ENCODE measurements at regions of chr20 and their contacts with region 1.

Region 1: DNA sequence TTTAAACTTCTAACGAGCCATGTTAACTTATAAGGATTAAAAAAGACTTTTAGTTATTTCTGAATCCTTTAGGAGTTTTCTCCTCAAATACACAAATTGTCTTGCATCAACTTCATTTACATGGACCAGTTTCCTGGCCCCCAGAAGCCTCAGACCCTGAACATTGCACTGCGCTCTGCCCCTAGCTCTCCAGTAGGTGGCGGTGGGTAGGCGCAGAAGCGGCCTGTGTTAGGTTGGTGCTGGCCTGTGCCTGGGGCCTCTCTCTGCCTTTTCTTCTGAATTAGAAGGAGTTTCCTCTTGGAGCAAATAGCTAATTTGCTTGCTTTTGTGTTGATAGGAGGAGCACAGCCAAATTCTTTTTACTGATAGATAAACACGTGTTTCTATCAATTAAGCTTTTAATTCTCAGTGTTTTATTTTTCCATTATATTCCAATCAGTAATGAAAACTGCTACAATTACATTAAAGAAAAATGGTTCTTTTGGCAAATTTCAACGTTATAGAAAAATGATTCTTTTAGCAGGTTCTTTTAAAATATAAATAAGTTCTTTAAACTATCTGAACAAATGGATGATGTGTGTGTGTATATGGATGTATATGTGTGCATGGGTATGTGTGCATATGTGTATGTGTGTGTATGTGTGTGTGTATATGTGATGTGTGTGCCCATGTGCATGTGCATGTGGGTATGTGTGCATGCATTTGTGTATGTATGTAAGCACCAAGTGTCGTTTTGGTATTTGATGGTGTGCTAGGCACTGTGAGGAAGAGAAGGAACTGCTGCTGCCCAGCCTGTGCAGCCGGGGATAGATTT is 44.5 kb downstream of the DTD1 start:
- DNase-seq: peak; percentile 15
- H3K4me3 ChIP-seq: no peak overlapping the region
- H3K27ac ChIP-seq: no peak overlapping the region
- H3K27me3 ChIP-seq: no peaks in the 10 kb centered on the region
- CTCF ChIP-seq: peak; percentile 99

Region 2: DNA sequence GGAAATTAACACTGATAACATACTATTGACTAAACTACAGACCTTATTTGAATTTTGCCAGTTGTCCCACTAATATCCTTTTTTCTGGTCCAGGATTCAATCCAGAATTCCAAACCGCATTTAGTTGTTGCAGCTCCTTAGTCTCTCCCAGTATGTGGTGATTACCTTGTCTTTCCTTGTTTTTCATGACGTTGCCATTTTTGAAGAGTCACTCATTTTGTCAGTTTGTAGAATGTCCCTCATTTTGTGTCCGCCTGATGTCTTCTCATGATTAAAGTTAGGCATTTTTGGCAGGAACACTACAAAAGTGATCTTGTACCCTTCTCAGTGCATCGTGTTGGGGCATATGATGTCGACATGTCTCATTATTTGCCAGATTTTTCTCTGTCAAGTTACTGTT is 11.4 kb before region 1 on chr20:
- CTCF ChIA-PET with region 1: interaction called, 12 read pairs
- POLR2A ChIA-PET with region 1: no interaction called
- DNase-seq: no peak
- H3K4me3 ChIP-seq: no peak overlapping the region
- H3K27ac ChIP-seq: no peak overlapping the region
- H3K27me3 ChIP-seq: no peaks in the 10 kb centered on the region
- CTCF ChIP-seq: no peak

Region 3: GRCh38 chr20:18653736-18654447 is 21.5 kb after region 1 on chr20:
- CTCF ChIA-PET with region 1: interaction called, 17 read pairs
- POLR2A ChIA-PET with region 1: no interaction called
- DNase-seq: no peak
- H3K4me3 ChIP-seq: no peak overlapping the region
- H3K27ac ChIP-seq: no peak overlapping the region
- H3K27me3 ChIP-seq: no peaks in the 10 kb centered on the region
- CTCF ChIP-seq: no peak

Region 4: GRCh38 chr20:18712131-18712530 is 79.7 kb after region 1 on chr20:
- CTCF ChIA-PET with region 1: interaction called, 13 read pairs
- POLR2A ChIA-PET with region 1: no interaction called
- DNase-seq: no peak
- H3K4me3 ChIP-seq: no peak overlapping the region
- H3K27ac ChIP-seq: no peak overlapping the region
- H3K27me3 ChIP-seq: no peaks in the 10 kb centered on the region
- CTCF ChIP-seq: no peak

Region 5: DNA sequence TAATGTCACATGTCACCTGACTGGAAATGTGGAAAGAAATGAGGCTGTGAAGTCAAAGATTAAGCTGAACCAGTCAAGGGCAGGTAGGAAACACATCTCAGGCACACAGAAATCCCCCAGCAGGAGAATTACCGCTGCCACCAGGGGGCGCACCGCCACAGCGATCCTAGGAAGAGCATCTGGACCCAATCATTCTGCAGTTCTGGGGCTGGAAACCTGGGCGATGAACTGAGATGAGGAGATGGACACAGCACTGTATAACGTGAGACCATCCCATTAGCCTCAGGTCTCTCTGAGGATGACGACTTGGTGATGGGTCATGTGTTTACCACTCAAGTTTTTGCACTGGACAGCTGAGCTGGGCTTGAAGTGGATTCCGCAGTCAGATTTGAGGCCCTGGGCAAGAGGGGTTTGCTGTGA is 573.6 kb after region 1 on chr20:
- CTCF ChIA-PET with region 1: interaction called, 13 read pairs
- POLR2A ChIA-PET with region 1: no interaction called
- DNase-seq: no peak
- H3K4me3 ChIP-seq: no peak overlapping the region
- H3K27ac ChIP-seq: no peak overlapping the region
- H3K27me3 ChIP-seq: peaks cover 2% of the 10 kb centered on the region
- CTCF ChIP-seq: peak; percentile 74